Naive thymus-derived CD4-positive, alpha-beta T cell (primary cell): ENCODE measurements at regions of chr12 and their contacts with region 1.

Region 1: DNA sequence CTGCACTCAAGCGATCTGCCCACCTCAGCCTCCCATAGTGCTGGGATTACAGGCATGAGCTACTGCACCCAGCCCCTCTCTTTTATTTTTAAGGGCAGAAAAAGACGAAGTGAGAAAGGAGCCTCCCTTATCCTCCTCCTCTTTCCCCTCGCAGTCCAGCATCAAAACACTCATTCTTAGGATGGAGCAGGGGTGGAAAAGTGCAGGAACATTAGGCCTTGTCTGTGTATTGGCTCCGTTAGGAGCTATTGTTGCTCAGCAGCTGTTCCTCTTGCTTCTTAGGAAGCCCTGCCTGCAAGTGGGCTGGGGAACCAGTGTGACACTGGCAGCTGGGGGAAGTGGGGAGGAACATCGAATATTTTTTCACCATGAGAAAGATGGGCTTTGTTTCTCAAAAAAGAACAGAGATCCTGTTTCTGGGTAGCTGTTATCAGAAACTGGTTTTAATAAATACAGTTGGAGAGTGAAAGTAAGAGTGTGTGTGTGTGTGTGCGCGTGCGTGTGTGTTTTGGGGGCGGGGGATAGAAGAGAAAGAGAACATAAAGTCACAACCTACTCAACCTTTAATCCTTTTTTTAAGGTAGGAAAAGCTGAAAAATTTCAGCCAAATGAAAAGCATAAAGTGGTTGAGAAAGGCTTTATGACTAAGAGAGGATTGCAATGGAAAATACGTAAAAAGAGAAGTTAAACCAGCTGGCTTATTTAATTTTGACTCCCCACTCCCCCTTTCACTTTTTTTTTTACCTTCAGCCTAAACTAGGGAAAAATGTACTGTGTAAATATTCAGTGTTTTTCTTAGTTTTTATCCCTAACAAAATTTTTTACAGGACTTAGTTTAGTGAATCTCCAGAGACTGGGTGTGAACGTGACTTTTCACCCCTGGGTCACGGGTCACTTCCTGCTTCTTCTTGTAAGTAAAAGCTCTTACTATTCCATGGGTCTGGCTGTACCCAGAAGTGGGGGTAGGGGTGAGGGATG is 197.2 kb upstream of the PLEKHG7 start:
- DNase-seq: peak; percentile 11 to 71 (median 50)
- ATAC-seq: peak; percentile 66
- H3K4me3 ChIP-seq: peak overlapping the region; percentile 48
- H3K4me3 Mint-ChIP-seq: peak overlapping the region; percentile 80 to 93 (median 87)
- H3K27ac ChIP-seq: peak overlapping the region; percentile 73
- H3K27ac Mint-ChIP-seq: peak overlapping the region; percentile 89 to 99 (median 96)
- H3K4me1 ChIP-seq: peaks cover 17 to 28% of the 10 kb centered on the region in 2 donors
- H3K4me1 Mint-ChIP-seq: peaks cover 15 to 48% (median 30%) of the 10 kb centered on the region in 7 donors
- H3K27me3 ChIP-seq: no peaks in the 10 kb centered on the region
- H3K27me3 Mint-ChIP-seq: no peaks in the 10 kb centered on the region

Region 2: GRCh38 chr12:92297932-92298696 is 207.4 kb before region 1 on chr12:
- CTCF ChIA-PET with region 1: interaction called, 4 read pairs
- POLR2A ChIA-PET with region 1: no interaction called
- intact Hi-C with region 1: loop called in 1 of 2 experiments (anchors 1 kb)
- DNase-seq: peak in 7 of 9 donors; percentile 29 to 75 (median 58)
- ATAC-seq: peak; percentile 83
- H3K4me3 ChIP-seq: no peak overlapping the region
- H3K4me3 Mint-ChIP-seq: peak overlapping the region in 9 of 10 donors; percentile 9 to 80 (median 63)
- H3K27ac ChIP-seq: peak overlapping the region; percentile 57
- H3K27ac Mint-ChIP-seq: peak overlapping the region in 2 of 9 donors; percentile 85 to 96
- H3K4me1 ChIP-seq: peaks cover 17 to 42% of the 10 kb centered on the region in 2 donors
- H3K4me1 Mint-ChIP-seq: peaks cover 8 to 33% (median 27%) of the 10 kb centered on the region in 7 donors
- H3K27me3 ChIP-seq: no peaks in the 10 kb centered on the region
- H3K27me3 Mint-ChIP-seq: no peaks in the 10 kb centered on the region

Region 3: DNA sequence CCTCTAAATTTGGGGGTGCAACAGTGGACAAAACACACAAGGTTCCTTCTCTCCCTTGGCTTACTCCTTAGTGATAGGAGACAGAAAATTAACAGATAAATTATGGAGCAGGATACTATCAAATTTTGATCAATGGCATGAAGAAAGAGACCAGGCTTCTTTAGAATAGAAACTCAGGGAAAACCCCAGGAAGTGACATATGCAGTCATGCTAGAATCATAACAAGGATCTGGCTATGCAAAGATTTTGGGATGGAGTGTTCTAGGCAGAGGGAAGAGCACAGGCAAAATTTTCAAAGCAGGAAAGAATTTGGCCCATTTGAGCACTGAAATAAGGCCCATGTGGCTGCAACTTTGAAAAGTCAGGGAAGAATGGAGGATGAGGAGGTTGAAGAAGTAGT is 15.0 kb after region 1 on chr12:
- CTCF ChIA-PET with region 1: no interaction called
- POLR2A ChIA-PET with region 1: interaction called, 6 read pairs
- intact Hi-C with region 1: loop called in 1 of 2 experiments (anchors 2 kb)
- DNase-seq: no peak
- ATAC-seq: no peak
- H3K4me3 ChIP-seq: no peak overlapping the region
- H3K4me3 Mint-ChIP-seq: no peak overlapping the region
- H3K27ac ChIP-seq: no peak overlapping the region
- H3K27ac Mint-ChIP-seq: peak overlapping the region in 2 of 9 donors; percentile 5 to 17
- H3K4me1 ChIP-seq: peaks cover 0 to 7% of the 10 kb centered on the region in 2 donors
- H3K4me1 Mint-ChIP-seq: peaks cover 6 to 32% (median 11%) of the 10 kb centered on the region in 7 donors
- H3K27me3 ChIP-seq: no peaks in the 10 kb centered on the region
- H3K27me3 Mint-ChIP-seq: no peaks in the 10 kb centered on the region

Region 4: DNA sequence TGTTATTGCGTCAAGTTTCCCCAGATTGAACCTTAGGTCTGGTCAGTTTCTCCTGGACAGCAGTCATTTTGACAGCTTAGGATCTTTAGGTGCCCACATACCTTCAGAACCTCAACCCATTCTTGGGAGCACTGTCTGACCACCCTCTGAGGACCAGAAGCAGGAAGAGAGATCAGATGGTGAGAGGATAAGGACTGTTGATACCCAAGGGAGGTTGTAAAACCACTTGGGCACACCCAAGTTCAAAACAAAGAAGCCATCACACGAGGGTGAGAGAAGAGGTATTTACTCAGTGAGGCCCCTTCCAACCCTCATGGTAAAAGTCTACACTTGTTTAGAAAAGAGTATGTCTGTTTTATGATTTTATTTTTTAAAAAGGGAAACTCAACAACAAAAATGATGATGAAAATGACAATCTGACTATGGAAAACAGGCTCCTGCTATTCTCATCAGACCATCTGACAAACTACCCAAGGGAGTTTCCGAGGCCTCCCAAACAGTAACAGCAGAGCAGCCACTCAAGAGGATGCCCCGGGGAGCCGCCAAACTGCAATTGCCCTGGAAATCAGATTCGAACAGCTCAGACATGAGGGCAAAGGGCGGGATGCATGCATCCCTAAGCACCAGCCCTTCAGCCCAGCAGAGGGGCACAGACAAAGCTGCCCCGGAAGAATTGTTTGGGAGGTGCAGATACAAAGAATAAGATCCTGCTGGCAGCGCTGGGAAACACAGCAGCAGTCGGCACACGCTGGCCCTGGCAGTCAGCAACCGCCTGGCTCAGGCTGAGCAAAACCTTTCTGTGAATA is 34.6 kb after region 1 on chr12:
- CTCF ChIA-PET with region 1: no interaction called
- POLR2A ChIA-PET with region 1: no interaction called
- intact Hi-C with region 1: loop called in 1 of 2 experiments (anchors 2 kb)
- DNase-seq: no peak
- ATAC-seq: peak; percentile 48
- H3K4me3 ChIP-seq: no peak overlapping the region
- H3K4me3 Mint-ChIP-seq: peak overlapping the region in 5 of 10 donors; percentile 14 to 69 (median 56)
- H3K27ac ChIP-seq: no peak overlapping the region
- H3K27ac Mint-ChIP-seq: peak overlapping the region in 5 of 9 donors; percentile 68 to 90 (median 71)
- H3K4me1 ChIP-seq: peaks cover 23 to 44% of the 10 kb centered on the region in 2 donors
- H3K4me1 Mint-ChIP-seq: peaks cover 21 to 72% (median 52%) of the 10 kb centered on the region in 7 donors
- H3K27me3 ChIP-seq: no peaks in the 10 kb centered on the region
- H3K27me3 Mint-ChIP-seq: no peaks in the 10 kb centered on the region

Region 5: GRCh38 chr12:92551853-92552397 is 46.4 kb after region 1 on chr12:
- CTCF ChIA-PET with region 1: no interaction called
- POLR2A ChIA-PET with region 1: interaction called, 7 read pairs
- intact Hi-C with region 1: loop called (anchors 2 kb)
- DNase-seq: peak in 1 of 9 donors; percentile 51
- ATAC-seq: no peak
- H3K4me3 ChIP-seq: no peak overlapping the region
- H3K4me3 Mint-ChIP-seq: no peak overlapping the region
- H3K27ac ChIP-seq: no peak overlapping the region
- H3K27ac Mint-ChIP-seq: no peak overlapping the region
- H3K4me1 ChIP-seq: peaks cover 11 to 15% of the 10 kb centered on the region in 2 donors
- H3K4me1 Mint-ChIP-seq: peaks cover 21 to 32% (median 27%) of the 10 kb centered on the region in 7 donors
- H3K27me3 ChIP-seq: no peaks in the 10 kb centered on the region
- H3K27me3 Mint-ChIP-seq: no peaks in the 10 kb centered on the region